Cardiac septum (tissue), 1 donor: ENCODE measurements at regions of chr21 and their contacts with region 1.

Region 1: GRCh38 chr21:42009831-42010523 is at the start of gene ZBTB21:
- DNase-seq: peak; percentile 99
- total RNA-seq, gene ZBTB21: 7.8 TPM

Region 2: GRCh38 chr21:41884501-41885030 is 125.4 kb before region 1 on chr21:
- intact Hi-C with region 1: loop called (anchors 5 kb)
- DNase-seq: no peak

Region 3: DNA sequence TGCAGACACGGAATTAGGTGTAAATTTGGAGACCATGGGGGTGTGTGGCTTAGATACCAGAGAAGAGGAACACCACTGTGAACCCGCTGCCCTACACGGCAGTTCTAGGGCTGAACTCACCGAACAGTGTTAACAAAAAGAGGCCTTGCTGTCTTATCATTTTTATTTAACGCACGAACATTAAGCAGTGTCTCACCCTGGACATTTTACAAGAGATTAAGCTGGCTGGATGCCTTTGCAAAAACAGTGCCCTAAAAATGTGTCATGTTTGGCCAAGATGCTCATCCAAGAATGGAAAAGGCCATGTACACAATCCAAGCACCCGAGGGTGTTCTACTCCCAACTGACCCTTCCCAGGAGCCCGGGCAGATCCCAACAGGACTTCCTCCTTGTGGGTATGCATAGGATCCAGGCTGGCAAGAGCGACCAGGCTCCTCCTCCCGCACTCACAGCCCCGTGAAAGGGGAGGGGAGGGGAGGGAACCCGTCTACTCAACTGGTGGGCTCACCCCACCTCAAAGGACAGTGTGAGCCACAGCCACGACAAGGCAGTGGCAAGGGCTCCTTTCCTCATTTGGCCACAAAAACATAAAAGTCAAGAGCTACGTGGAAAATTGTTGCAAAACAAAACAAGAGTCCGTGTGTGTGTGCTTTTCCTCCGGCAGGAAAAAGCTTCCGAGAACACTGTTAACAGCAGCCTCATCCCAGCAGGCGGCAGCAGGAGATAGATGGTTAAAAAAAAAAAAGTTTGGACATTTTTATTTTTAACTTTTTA is 76.5 kb before region 1 on chr21:
- intact Hi-C with region 1: loop called (anchors 5 kb)
- DNase-seq: no peak

Region 4: DNA sequence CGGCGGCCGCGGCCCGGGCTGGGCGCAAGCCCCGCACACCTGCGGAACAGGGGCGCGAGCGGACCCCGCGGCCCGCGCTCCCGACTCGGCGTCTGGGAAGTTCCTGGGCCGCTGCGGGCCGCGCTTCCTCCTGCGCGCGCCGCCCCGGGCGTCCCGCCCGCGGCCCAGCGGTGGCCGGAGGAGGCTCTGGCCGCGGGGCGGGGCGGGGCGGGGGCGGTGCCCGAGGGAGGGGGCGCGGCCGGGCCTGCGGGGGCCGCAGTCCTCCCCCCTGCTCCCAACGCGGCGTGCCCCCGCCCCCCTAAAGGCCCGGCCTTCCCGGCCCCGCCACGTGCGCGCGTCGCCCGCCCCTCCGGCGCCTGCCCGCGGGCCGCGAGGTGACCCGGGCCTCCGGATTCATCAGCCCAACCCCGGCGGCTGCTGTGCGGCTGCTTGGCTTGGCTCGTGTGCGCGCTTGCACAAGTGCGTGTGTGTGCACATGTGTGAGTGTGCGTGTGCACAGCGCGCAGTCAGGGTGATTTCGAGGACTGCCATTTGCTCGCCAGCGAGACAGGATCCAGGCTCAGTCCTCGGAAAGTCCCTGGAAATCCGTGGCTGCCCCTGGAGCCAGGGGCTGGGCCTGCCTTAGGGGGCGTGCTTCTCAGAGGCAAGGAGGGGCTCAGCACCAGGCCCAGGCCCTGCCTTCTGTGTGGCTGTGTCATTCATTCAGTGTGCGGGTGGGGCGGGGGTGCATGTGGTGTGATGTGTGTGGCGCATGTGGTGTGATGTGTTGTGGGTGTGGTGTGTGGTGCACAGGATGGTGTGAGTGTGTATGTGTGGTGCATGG is 55.9 kb before region 1 on chr21 and contains the start of gene C2CD2:
- intact Hi-C with region 1: loop called (anchors 2 kb)
- DNase-seq: peak; percentile 80
- total RNA-seq, gene C2CD2: 7.7 TPM

Region 5: GRCh38 chr21:41973861-41974751 is 35.9 kb before region 1 on chr21:
- intact Hi-C with region 1: no loop called
- DNase-seq: no peak

Region 6: DNA sequence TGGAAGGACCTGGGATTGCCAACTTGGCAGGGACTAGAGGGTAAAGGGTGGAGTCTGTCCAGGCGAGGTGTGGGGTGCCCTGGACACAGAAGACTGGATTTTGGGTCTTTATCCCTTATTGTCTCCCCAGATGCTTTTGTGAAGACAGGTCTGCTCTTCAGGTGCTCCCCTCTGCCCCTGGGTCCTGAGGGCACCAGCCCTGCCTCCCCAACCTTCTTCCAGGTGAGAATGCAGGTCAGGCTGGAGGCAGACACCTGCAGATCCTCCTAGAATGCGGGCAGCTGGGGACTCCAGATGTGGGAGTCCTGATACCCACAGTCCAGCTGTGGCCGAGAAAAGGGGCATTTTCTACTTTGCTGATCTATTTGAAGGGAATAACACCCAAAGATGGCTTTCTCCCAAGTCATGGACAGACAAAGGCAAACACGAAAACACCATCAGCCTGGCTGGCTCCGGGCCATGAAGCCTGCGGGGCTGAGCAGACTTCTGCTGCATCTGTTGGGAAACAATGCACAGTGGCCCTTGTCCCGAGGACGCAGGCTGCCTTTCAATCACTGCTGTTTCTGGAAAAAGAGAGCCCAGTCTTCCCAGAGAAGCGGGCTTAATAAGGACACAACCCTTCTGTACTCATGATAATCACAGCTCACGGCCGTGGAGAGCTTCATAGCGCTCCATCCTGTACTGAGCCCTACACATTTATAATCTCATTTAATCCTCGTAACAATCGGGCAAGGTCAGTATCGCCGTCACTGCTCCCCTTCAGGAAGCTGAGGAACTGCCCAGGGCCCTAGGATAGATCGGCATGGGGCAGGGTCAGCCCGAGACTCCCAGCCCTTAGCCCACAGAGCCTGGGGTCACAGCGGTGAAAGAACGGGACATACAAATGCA is 147.0 kb after region 1 on chr21:
- intact Hi-C with region 1: no loop called
- DNase-seq: peak; percentile 67